Activated B cell treated with CpG ODN at 0.5 μM for 24 hours (primary cell): ENCODE measurements at regions of chr18 and their contacts with region 1.

Region 1: DNA sequence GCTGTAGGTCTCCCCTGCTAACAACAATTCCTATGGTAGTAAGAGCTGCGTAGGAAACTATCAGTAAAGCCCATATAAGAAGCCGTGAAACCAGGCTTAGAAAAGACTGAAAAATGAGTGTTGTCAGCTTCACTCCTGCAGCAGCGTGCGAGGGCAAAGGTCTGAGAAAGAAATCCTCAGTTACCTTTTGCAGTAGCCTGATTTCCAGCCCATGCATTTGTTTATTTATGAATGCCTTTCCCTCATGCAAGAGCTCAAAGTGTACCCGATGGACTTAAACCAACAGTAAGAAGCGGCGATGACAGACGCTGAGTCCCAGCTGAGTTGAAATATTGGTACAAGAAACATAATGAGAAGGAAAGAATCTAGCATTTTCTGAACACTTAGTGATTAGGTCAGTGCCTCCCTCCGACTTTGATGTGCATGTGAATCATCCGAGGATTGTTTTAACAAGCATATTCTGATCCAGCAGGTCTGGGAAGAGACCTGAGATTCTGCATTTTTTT is 15.0 kb upstream of the POLI start:
- DNase-seq: no peak
- ATAC-seq: no peak
- H3K4me3 Mint-ChIP-seq: no peak overlapping the region
- H3K27ac Mint-ChIP-seq: no peak overlapping the region
- H3K4me1 Mint-ChIP-seq: peaks cover 36% of the 10 kb centered on the region
- H3K27me3 Mint-ChIP-seq: no peaks in the 10 kb centered on the region
- CTCF ChIP-seq: no peak

Region 2: DNA sequence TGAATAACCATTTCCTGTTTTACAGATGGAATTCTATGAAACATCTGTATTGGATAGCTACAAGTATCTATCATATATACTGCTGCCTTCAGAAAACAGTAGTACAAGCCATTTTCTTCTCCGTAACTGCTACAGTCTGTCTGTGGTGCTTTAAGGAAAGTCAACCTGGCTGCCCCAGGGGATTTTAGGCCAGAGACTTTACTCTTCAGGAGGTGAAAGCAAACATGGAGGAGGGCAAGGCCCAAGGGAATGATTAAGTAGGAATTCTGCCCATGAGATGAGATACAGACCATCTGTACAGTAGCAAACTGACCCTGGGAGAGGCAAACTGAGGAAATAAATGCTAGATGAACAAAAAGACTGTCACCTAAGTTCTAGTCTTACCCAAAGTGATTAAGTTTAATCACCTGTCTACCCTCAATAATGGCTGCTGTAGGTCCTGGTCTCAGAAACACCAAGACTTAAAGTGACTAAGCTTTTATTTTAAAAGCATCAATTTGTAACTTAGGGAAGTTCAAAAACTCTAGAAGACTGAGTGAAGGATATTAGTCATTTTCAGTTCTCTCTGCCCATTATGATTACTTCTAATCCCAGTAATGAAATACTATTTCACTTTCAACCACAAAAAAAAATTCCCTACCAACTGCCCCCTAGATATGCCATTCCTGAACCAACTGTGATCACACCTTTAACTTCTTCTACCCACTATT is 44.7 kb before region 1 on chr18:
- CTCF ChIA-PET with region 1: no interaction called
- POLR2A ChIA-PET with region 1: interaction called, 3 read pairs
- intact Hi-C with region 1: loop called (anchors 1 kb)
- DNase-seq: no peak
- ATAC-seq: peak; percentile 71
- H3K4me3 Mint-ChIP-seq: peak overlapping the region; percentile 58
- H3K27ac Mint-ChIP-seq: peak overlapping the region; percentile 78
- H3K4me1 Mint-ChIP-seq: peaks cover 71% of the 10 kb centered on the region
- H3K27me3 Mint-ChIP-seq: no peaks in the 10 kb centered on the region
- CTCF ChIP-seq: no peak

Region 3: DNA sequence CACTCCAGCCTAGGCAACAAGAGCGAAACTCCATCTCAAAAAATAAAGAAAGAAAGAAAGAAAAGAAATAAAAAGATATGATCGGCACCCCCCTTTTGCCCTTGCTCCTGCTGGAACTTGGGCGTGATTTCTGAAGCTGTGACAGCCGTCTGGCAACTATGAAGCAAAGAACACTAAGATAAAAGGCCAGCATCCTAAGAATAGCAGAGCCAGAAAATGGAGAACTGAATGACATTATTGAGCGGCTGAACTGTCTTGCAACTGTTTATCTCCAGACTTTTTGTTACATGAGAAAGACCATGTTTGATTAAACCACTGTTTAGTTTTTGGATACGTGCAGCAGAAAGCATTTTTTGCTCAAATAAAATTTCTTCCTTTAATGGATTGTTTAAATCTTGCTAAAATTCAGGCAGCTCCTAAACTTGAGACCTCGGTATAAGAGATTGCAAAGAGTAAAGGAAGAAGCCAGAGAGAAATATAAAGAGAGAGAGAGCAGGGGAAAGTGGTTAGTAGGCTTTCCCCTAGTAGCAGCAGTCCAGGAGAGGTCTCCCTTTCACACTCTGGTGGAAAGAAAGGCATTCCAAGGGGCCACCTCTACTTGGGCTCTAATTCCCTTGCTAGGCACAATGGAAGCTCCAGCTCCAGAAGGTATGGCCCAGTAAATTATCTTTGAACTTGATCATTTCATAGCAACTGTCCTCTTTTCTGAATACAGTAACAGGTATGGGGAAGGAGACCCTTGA is 21.7 kb before region 1 on chr18:
- CTCF ChIA-PET with region 1: no interaction called
- POLR2A ChIA-PET with region 1: no interaction called
- intact Hi-C with region 1: loop called (anchors 2 kb)
- DNase-seq: no peak
- ATAC-seq: no peak
- H3K4me3 Mint-ChIP-seq: no peak overlapping the region
- H3K27ac Mint-ChIP-seq: no peak overlapping the region
- H3K4me1 Mint-ChIP-seq: no peaks in the 10 kb centered on the region
- H3K27me3 Mint-ChIP-seq: no peaks in the 10 kb centered on the region
- CTCF ChIP-seq: no peak

Region 4: DNA sequence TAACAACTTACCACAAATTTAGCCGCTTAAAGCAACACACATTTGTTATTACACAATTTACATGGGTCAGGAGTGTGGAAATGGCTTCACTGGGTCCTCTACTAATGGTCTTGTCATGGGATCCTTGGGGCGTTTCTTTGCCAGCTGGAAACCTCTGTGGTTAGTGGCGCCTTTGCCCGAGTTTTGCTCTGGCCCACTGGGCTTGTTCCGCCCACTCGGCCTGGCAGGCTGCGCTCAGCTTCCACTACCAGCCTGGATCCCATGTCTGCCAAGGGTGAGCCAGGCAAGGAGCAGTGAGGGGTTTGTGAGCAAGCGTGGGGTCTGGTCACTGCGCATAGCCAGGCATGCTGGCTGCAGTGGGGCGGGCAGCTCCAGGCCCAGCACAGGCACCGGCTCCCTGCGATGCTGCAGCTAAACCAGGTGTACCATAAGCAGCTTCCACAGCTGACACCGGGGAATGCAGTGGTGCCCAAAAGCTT is 13.7 kb before region 1 on chr18:
- CTCF ChIA-PET with region 1: interaction called, 3 read pairs
- POLR2A ChIA-PET with region 1: no interaction called
- intact Hi-C with region 1: loop called (anchors 1 kb)
- DNase-seq: no peak
- ATAC-seq: no peak
- H3K4me3 Mint-ChIP-seq: no peak overlapping the region
- H3K27ac Mint-ChIP-seq: no peak overlapping the region
- H3K4me1 Mint-ChIP-seq: peaks cover 6% of the 10 kb centered on the region
- H3K27me3 Mint-ChIP-seq: no peaks in the 10 kb centered on the region
- CTCF ChIP-seq: no peak